Stomach (tissue), 19 donors: ENCODE measurements at regions of chr20 and their contacts with region 1.

Region 1: GRCh38 chr20:2172305-2173175 is 70.9 kb downstream of the STK35 start:
- DNase-seq: peak; percentile 80 to 85
- H3K4me3 ChIP-seq: no peak overlapping the region
- H3K27ac ChIP-seq: no peak overlapping the region
- H3K4me1 ChIP-seq: peaks cover 0 to 7% (median 3%) of the 10 kb centered on the region in 4 donors
- H3K27me3 ChIP-seq: peaks cover 0 to 8% (median 0%) of the 10 kb centered on the region in 3 donors
- CTCF ChIP-seq: peak in 5 of 7 experiments; percentile 81 to 92 (median 85)
- EP300 ChIP-seq: no peak
- POLR2A ChIP-seq: no peak

Region 2: GRCh38 chr20:1535420-1536175 is 636.9 kb before region 1 on chr20:
- intact Hi-C with region 1: no loop called
- DNase-seq: peak in 1 of 2 donors; percentile 22
- H3K4me3 ChIP-seq: no peak overlapping the region
- H3K27ac ChIP-seq: peak overlapping the region in 2 of 5 donors; percentile 81 to 82
- H3K4me1 ChIP-seq: no peaks in the 10 kb centered on the region
- H3K27me3 ChIP-seq: peaks cover 0 to 9% (median 0%) of the 10 kb centered on the region in 3 donors
- CTCF ChIP-seq: no peak
- EP300 ChIP-seq: no peak
- POLR2A ChIP-seq: no peak

Region 3: DNA sequence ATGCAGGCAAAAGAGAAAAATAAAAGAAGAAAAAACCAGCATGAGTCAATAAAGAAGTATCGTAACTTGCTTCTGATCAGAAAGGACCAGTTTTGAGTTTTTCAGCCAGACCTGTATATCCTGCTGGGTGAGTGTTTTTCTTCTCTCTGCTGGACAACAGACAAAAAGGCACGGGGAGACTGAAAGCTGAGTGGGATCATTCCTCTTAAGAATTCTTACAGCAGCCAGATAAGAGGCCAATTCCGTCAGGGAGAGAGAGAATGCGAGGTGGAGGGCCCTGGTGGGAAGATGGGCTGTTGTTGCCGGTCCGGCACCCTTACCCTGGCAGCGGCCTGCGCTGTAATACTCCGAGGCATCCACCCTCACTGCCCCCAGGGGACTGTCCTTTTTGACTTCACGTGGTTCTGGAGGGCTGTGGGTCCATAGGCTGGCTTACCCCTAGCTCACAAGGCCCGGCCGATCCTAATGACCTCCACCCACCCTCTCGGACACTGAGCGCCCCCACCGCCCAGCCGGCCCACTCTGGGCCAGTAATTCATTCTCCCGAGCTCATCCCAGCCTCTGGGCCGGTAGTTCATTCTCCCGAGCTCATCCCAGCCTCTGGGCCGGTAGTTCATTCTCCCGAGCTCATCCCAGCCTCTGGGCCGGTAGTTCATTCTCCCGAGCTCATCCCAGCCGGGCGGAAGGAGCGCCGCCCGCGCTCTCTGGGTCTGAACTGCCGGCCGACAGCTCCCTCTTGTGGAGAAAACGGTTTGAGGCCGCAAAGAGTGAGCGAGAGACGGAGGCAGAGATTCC is 395.7 kb before region 1 on chr20:
- intact Hi-C with region 1: loop called (anchors 10 kb)
- DNase-seq: peak; percentile 84 to 95
- H3K4me3 ChIP-seq: peak overlapping the region; percentile 58 to 72 (median 70)
- H3K27ac ChIP-seq: peak overlapping the region in 3 of 5 donors; percentile 64 to 79 (median 71)
- H3K4me1 ChIP-seq: peaks cover 7 to 18% (median 13%) of the 10 kb centered on the region in 4 donors
- H3K27me3 ChIP-seq: peaks cover 0 to 6% (median 0%) of the 10 kb centered on the region in 3 donors
- CTCF ChIP-seq: peak in 5 of 7 experiments; percentile 56 to 83 (median 74)
- EP300 ChIP-seq: no peak
- POLR2A ChIP-seq: no peak

Region 4: DNA sequence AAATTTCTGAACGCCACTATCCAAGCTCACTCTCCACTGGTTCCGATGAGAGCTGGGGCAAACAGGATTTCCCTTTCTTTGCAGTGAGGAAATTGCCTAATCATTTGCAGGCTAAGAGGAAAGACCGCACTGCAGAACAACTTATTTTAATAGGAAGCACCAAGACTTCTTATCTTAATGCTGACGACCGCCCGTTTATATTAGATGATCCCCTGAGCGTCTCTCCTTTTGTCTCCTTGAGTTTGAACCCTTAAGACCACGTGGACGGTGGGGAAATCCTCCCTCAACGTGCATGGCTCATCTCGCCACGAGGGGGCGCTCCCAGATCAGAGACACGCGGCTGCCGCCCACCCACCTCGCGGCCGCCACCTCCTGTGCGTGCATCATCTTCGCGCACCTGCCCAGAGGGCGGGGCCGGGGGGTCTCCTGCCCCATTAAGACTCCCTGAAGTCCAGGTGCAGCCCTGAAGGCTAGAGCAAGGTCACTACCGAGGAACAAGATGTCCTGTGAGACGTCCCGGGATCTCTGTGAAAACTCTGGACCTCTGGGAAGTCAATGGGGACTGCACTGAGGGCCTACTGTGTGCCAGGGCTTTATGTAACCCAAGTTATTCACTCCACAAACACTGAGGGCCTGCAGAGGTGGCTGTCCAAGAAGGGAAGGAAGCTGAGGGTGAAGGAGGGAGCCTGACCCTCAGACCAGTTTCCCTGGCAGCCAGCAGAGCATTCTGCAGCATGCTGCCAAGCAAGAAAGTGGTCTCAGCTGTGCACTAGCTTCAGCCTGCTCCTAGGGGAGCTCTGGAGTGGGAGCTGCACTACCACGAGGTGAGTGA is 206.8 kb before region 1 on chr20:
- intact Hi-C with region 1: loop called (anchors 5 kb)
- DNase-seq: peak; percentile 69 to 85
- H3K4me3 ChIP-seq: peak overlapping the region in 1 of 4 donors; percentile 2
- H3K27ac ChIP-seq: peak overlapping the region in 1 of 5 donors; percentile 27
- H3K4me1 ChIP-seq: peaks cover 0 to 14% (median 8%) of the 10 kb centered on the region in 4 donors
- H3K27me3 ChIP-seq: peaks cover 0 to 44% (median 0%) of the 10 kb centered on the region in 3 donors
- CTCF ChIP-seq: peak in 5 of 7 experiments; percentile 78 to 95 (median 89)
- EP300 ChIP-seq: no peak
- POLR2A ChIP-seq: no peak

Region 5: GRCh38 chr20:2237059-2237458 is 64.5 kb after region 1 on chr20:
- intact Hi-C with region 1: no loop called
- DNase-seq: peak; percentile 15 to 43
- H3K4me3 ChIP-seq: no peak overlapping the region
- H3K27ac ChIP-seq: no peak overlapping the region
- H3K4me1 ChIP-seq: no peaks in the 10 kb centered on the region
- H3K27me3 ChIP-seq: no peaks in the 10 kb centered on the region
- CTCF ChIP-seq: no peak
- EP300 ChIP-seq: no peak
- POLR2A ChIP-seq: no peak